Activated CD4-positive, alpha-beta memory T cell treated with anti-CD3 and anti-CD28 coated beads, Interleukin-2, amount 10 ng/mL, durations not matched to agents 7 days and 5 days (primary cell): ENCODE measurements at regions of chr2 and their contacts with region 1.

Region 1: DNA sequence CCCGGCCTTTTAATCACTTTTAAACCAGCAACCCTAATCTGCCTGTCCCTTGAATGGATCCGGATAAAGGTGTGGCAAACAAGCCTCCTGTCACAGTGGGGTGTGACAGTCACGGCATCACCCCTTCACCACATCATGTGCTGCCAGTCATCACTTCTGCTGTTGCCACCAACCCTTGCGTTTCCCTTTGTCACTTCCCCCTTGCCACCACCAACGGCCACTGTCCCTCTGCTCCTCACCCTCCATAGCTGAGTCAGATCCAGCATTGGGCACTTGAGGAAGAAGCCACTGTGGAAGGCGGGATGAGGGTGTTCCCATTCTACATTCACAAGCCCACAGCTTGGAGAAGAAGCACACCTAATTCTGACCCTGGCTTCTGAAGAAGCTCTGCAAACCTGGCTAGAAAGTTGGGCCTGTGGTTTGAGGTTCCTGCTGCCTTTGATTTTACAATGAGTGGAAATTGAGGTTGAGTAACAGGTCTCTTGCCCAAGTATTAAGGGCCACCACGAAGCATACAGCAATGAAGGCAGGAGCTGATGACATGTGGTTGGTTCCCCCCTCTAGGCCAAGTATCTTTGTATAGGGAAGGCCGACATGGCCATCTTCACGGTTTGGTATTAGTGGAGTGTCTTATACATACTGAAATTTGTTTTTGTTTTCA is 22.9 kb upstream of the DARS1 start:
- DNase-seq: peak; percentile 90
- H3K4me3 Mint-ChIP-seq: peak overlapping the region; percentile 50
- H3K27ac Mint-ChIP-seq: peak overlapping the region; percentile 94
- H3K4me1 Mint-ChIP-seq: peaks cover 68% of the 10 kb centered on the region
- H3K27me3 Mint-ChIP-seq: no peaks in the 10 kb centered on the region

Region 2: DNA sequence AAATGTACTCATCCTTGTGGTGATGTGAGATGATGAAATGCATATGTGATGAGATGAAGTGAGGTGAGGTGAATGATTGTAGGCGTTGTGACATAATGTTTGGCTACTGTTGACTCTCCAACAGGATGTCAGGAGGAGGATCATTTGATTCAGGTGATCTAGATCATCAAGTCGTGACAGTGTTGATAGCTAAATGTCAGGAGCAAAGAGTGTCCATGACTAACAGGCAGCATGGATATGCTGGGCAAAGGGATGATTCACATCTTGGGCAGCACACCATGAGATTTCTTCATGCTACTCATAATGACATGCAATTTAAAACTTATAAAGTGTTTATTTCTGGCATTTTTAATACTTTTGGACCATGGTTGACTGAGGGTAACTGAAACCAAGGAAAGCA is 306.9 kb before region 1 on chr2:
- CTCF ChIA-PET with region 1: no interaction called
- POLR2A ChIA-PET with region 1: no interaction called
- DNase-seq: no peak
- H3K4me3 Mint-ChIP-seq: no peak overlapping the region
- H3K27ac Mint-ChIP-seq: no peak overlapping the region
- H3K4me1 Mint-ChIP-seq: no peaks in the 10 kb centered on the region
- H3K27me3 Mint-ChIP-seq: no peaks in the 10 kb centered on the region

Region 3: DNA sequence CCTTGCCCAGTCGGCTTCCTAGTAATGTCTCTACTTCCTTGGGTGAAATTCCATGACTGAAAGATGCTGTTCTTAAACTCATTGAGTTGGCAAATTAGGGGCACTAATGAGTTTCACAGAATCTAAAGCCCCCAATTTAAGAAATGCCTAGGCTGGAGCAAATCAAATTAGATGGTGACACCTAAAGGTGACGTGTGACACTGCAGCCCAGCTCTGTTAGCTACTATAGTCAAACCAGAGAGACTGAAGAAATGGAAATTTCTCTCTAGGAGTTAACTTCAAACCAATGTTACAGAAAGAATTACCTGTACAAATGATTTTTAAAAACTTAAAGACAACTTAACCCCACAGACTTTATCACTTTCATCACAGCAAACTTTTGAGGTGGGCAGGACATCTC is 208.6 kb before region 1 on chr2:
- CTCF ChIA-PET with region 1: no interaction called
- POLR2A ChIA-PET with region 1: no interaction called
- DNase-seq: no peak
- H3K4me3 Mint-ChIP-seq: no peak overlapping the region
- H3K27ac Mint-ChIP-seq: no peak overlapping the region
- H3K4me1 Mint-ChIP-seq: peaks cover 6% of the 10 kb centered on the region
- H3K27me3 Mint-ChIP-seq: no peaks in the 10 kb centered on the region

Region 4: GRCh38 chr2:135885709-135886108 is 122.6 kb before region 1 on chr2:
- CTCF ChIA-PET with region 1: no interaction called
- POLR2A ChIA-PET with region 1: no interaction called
- DNase-seq: no peak
- H3K4me3 Mint-ChIP-seq: no peak overlapping the region
- H3K27ac Mint-ChIP-seq: no peak overlapping the region
- H3K4me1 Mint-ChIP-seq: peaks cover 2% of the 10 kb centered on the region
- H3K27me3 Mint-ChIP-seq: peaks cover 14% of the 10 kb centered on the region

Region 5: GRCh38 chr2:135960656-135961551 is 47.4 kb before region 1 on chr2:
- CTCF ChIA-PET with region 1: interaction called, 3 read pairs
- POLR2A ChIA-PET with region 1: interaction called, 17 read pairs
- DNase-seq: peak; percentile 33
- H3K4me3 Mint-ChIP-seq: peak overlapping the region; percentile 53
- H3K27ac Mint-ChIP-seq: peak overlapping the region; percentile 92
- H3K4me1 Mint-ChIP-seq: peaks cover 58% of the 10 kb centered on the region
- H3K27me3 Mint-ChIP-seq: no peaks in the 10 kb centered on the region

Region 6: DNA sequence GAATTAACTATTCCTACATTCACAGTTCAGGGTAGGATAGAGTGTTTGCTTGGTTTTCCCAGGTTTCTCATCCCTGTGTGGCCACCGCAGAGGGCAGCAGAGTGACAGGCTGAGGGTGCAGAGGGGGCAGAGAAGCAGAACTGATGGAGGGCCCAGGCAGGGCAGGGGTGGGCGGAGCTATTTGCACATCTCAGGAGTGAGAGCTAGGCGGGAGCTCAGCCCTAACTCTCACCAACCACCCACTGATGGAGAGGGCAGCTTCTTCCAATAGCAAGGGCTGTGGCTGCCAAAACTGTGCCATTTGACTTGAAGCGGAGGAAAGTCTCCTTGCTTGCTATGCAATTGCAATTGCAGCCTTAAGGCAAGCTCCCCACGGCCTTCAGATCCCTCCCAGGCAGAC is 11.0 kb before region 1 on chr2:
- CTCF ChIA-PET with region 1: interaction called, 3 read pairs
- POLR2A ChIA-PET with region 1: interaction called, 12 read pairs
- DNase-seq: no peak
- H3K4me3 Mint-ChIP-seq: no peak overlapping the region
- H3K27ac Mint-ChIP-seq: no peak overlapping the region
- H3K4me1 Mint-ChIP-seq: peaks cover 17% of the 10 kb centered on the region
- H3K27me3 Mint-ChIP-seq: no peaks in the 10 kb centered on the region